Endothelial cell of umbilical vein (primary cell): ENCODE measurements at regions of chr17 and their contacts with region 1.

Region 1: DNA sequence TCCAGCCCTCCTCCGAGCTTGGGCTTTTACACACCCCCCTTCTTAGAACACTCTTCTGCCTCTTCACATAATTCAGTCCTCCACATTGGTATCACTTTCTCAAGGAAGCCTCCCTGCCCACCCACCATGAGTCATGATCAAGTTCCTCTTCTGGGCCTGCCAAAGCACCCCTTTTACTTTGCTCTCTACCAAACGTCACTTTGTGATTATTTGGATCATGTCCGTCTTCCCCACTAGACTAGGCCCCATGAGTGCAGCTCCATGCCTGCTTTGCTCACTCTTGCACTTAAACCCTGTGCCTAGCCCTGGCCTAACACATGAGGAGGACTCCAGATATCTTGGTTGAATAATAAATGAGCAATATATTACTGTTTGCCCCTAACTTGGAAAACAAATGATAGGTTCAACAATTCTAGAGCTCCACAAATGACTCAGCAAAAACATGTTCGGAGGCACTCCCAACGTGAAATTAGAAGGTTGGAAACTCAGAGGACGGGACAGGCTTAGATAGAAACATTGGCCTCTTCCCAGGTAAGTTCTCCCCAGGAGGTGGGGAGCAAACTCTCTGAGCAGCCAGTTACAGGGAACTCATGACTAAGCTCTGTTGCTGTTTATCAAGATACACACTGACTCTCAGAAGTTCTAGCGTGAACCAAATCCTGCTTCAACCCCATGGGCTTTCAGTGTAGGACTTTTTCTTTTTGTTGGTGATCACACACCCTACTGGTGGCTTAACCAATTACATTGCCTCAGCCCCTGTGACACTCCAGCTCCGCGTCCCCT is 28.3 kb downstream of the G6PC1 start:
- DNase-seq: peak; percentile 81
- H3K4me3 ChIP-seq: no peak overlapping the region
- H3K27ac ChIP-seq: peak overlapping the region; percentile 23
- H3K4me1 ChIP-seq: peaks cover 9% of the 10 kb centered on the region
- H3K27me3 ChIP-seq: peaks cover 0 to 3% of the 10 kb centered on the region in 2 experiments
- CTCF ChIP-seq: peak; percentile 53 to 57
- POLR2A ChIP-seq: no peak

Region 2: GRCh38 chr17:42832974-42833766 is 95.7 kb before region 1 on chr17 and contains the start of gene PSME3:
- CTCF ChIA-PET with region 1: interaction called, 14 read pairs
- POLR2A ChIA-PET with region 1: no interaction called
- dilution Hi-C with region 1: no loop called
- intact Hi-C with region 1: no loop called
- DNase-seq: peak; percentile 91
- H3K4me3 ChIP-seq: peak within 1 kb of the TSS; percentile 58 to 81 (median 80)
- H3K27ac ChIP-seq: peak within 1 kb of the TSS; percentile 71
- H3K4me1 ChIP-seq: peaks cover 17% of the 10 kb centered on the region
- H3K27me3 ChIP-seq: peaks cover 0 to 4% of the 10 kb centered on the region in 2 experiments
- CTCF ChIP-seq: no peak
- POLR2A ChIP-seq: peak; percentile 91
- total RNA-seq, gene PSME3: 126 and 133 TPM in 2 replicates

Region 3: GRCh38 chr17:42850954-42851353 is 78.0 kb before region 1 on chr17 and contains the start of gene AOC3:
- CTCF ChIA-PET with region 1: interaction called, 132 read pairs
- POLR2A ChIA-PET with region 1: interaction called, 3 read pairs
- dilution Hi-C with region 1: no loop called
- intact Hi-C with region 1: no loop called
- DNase-seq: no peak
- H3K4me3 ChIP-seq: no peak within 1 kb of the TSS
- H3K27ac ChIP-seq: no peak within 1 kb of the TSS
- H3K4me1 ChIP-seq: no peaks in the 10 kb centered on the region
- H3K27me3 ChIP-seq: peaks cover 0 to 3% of the 10 kb centered on the region in 2 experiments
- CTCF ChIP-seq: no peak
- POLR2A ChIP-seq: no peak
- total RNA-seq, gene AOC3: 0.27 and 0.44 TPM in 2 replicates

Region 4: GRCh38 chr17:42895185-42895555 is 33.7 kb before region 1 on chr17:
- CTCF ChIA-PET with region 1: no interaction called
- POLR2A ChIA-PET with region 1: no interaction called
- dilution Hi-C with region 1: no loop called
- intact Hi-C with region 1: loop called (anchors 2 kb)
- DNase-seq: peak; percentile 88
- H3K4me3 ChIP-seq: no peak overlapping the region
- H3K27ac ChIP-seq: peak overlapping the region; percentile 81
- H3K4me1 ChIP-seq: peaks cover 25% of the 10 kb centered on the region
- H3K27me3 ChIP-seq: no peaks in the 10 kb centered on the region
- CTCF ChIP-seq: no peak
- POLR2A ChIP-seq: no peak